ENCODE measurements at regions of chr12 and their contacts with region 1.

Region 1: DNA sequence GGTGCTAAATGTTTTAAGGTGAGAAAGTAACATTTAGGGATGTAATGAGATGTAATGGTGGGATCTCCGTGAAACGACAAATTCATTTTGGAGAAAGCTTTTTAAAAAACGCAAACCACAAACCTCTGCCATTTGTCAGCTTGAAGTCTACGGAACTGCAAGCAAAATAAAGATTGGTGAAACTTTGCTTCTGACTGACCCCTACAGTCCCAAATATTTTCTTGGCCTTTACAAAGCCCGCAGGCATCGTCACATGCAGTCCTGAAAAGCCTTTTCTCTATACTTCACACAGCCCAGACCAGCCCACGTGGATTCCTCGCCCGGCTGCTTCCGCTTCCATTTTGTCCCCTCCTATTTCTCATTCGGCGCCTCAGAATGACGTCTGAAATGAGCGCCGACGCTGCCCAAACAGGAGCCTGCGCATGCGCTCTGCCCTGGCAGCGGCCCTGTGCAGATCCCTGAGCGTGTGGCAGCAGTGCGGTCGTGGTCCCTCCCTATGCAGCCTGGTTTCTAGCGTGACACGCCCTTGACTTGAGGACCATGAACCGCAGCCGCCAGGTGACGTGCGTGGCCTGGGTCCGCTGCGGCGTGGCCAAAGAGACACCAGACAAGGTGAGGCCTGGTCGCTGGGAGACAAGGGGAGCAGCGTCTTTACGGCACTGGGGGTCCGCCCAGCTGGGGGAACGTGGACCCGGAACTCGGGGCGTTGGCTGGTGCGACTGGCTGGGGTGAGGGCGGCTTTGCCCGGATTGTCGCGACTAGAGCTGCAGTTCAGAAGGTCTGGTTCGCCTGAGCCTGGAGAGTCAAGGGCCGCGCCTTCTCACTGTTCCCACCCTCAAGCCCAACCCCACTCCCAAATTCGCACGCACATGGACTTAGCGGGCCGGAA is at the start of gene PWP1:
- DNase-seq: peak; percentile 95 to 99
- ATAC-seq: peak; percentile 90 to 93 (median 90)
- H3K4me3 ChIP-seq: peak within 1 kb of the TSS; percentile 80
- H3K4me3 Mint-ChIP-seq: peak within 1 kb of the TSS; percentile 99
- H3K27ac ChIP-seq: peak within 1 kb of the TSS; percentile 65
- H3K27ac Mint-ChIP-seq: peak within 1 kb of the TSS; percentile 97 to 99
- H3K4me1 ChIP-seq: peaks cover 15% of the 10 kb centered on the region
- H3K4me1 Mint-ChIP-seq: peaks cover 28 to 31% of the 10 kb centered on the region in 2 donors
- H3K27me3 ChIP-seq: no peaks in the 10 kb centered on the region
- H3K27me3 Mint-ChIP-seq: peaks cover 1 to 4% of the 10 kb centered on the region in 2 donors
- CTCF ChIP-seq: no peak
- total RNA-seq, gene PWP1: 22.2 to 26.5 (median 26.3) TPM

Region 2: GRCh38 chr12:107760809-107761501 is 75.4 kb after region 1 on chr12 and contains the start of gene PRDM4:
- intact Hi-C with region 1: loop called (anchors 1 kb)
- DNase-seq: peak; percentile 92 to 97
- ATAC-seq: peak; percentile 90 to 99 (median 92)
- H3K4me3 ChIP-seq: peak within 1 kb of the TSS; percentile 72
- H3K4me3 Mint-ChIP-seq: peak within 1 kb of the TSS; percentile 89
- H3K27ac ChIP-seq: peak within 1 kb of the TSS; percentile 78
- H3K27ac Mint-ChIP-seq: peak within 1 kb of the TSS; percentile 86 to 90
- H3K4me1 ChIP-seq: peaks cover 15% of the 10 kb centered on the region
- H3K4me1 Mint-ChIP-seq: peaks cover 29 to 32% of the 10 kb centered on the region in 2 donors
- H3K27me3 ChIP-seq: no peaks in the 10 kb centered on the region
- H3K27me3 Mint-ChIP-seq: peaks cover 0 to 6% of the 10 kb centered on the region in 2 donors
- CTCF ChIP-seq: no peak
- total RNA-seq, gene PRDM4: 37.0 to 49.5 (median 40.5) TPM

Measured in natural killer cell (primary cell).